HepG2 (cell line): ENCODE measurements at regions of chr7 and their contacts with region 1.

Region 1: GRCh38 chr7:151759591-151760042 is 117.3 kb downstream of the PRKAG2 start:
- DNase-seq: peak; percentile 56
- ATAC-seq: peak; percentile 89
- H3K4me3 ChIP-seq: no peak overlapping the region
- H3K27ac ChIP-seq: no peak overlapping the region
- H3K4me1 ChIP-seq: no peaks in the 10 kb centered on the region
- H3K27me3 ChIP-seq: peaks cover 3 to 33% of the 10 kb centered on the region in 2 experiments; a peak in 4 of 5 replicates
- CTCF ChIP-seq: peak; percentile 93
- EP300 ChIP-seq: no peak
- POLR2A ChIP-seq: no peak
- RAD21 ChIP-seq: peak; percentile 85

Region 2: GRCh38 chr7:151368136-151368571 is 391.5 kb before region 1 on chr7:
- CTCF ChIA-PET with region 1: interaction called, 10 read pairs
- POLR2A ChIA-PET with region 1: no interaction called
- in situ Hi-C with region 1: no loop called
- intact Hi-C with region 1: no loop called
- DNase-seq: peak; percentile 68
- ATAC-seq: peak; percentile 100
- H3K4me3 ChIP-seq: no peak overlapping the region
- H3K27ac ChIP-seq: no peak overlapping the region
- H3K4me1 ChIP-seq: no peaks in the 10 kb centered on the region
- H3K27me3 ChIP-seq: no peaks in the 10 kb centered on the region
- CTCF ChIP-seq: peak; percentile 95
- EP300 ChIP-seq: no peak
- POLR2A ChIP-seq: no peak
- RAD21 ChIP-seq: peak; percentile 89

Region 3: GRCh38 chr7:151570366-151570915 is 189.2 kb before region 1 on chr7:
- CTCF ChIA-PET with region 1: interaction called, 14 read pairs
- POLR2A ChIA-PET with region 1: no interaction called
- in situ Hi-C with region 1: loop called (anchors 10 kb)
- intact Hi-C with region 1: loop called (anchors 2 kb)
- DNase-seq: no peak
- ATAC-seq: no peak
- H3K4me3 ChIP-seq: no peak overlapping the region
- H3K27ac ChIP-seq: no peak overlapping the region
- H3K4me1 ChIP-seq: no peaks in the 10 kb centered on the region
- H3K27me3 ChIP-seq: no peaks in the 10 kb centered on the region
- CTCF ChIP-seq: 0 out of 2 replicates have a peak, but pooled peaks have one; percentile 26
- EP300 ChIP-seq: no peak
- POLR2A ChIP-seq: no peak
- RAD21 ChIP-seq: no peak

Region 4: DNA sequence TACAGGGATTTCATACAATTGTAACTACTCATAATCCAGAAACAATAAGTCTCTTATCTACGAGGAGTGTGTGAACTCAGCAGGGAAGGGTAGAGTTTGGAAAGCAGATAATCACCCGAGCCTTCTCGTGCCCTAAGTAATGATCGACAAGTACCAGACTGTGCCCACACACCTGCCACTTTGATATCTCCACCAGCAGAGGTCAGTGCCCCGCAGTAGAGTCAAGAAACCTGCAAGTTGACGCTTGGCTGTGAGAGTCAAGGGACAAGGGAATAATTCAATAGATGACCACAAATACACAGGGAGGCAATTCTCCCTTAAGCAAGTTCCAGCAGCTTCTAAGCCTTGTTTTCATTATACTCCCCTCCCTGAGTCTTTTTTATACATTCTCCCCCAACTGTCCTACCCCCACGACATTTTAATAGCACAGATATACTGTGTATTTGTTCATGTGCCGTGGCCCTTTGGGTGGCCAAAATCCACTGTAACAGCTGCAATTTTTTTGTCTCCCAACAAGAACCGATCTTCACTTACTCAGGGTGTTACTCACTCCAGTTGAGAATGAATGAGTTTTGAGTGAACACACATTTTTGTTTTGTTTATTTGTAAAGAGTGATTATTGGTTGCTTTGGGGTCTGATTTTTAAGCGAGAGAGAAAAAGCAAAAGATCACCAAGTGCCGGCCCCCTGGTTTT is 133.0 kb before region 1 on chr7:
- CTCF ChIA-PET with region 1: interaction called, 9 read pairs
- POLR2A ChIA-PET with region 1: no interaction called
- in situ Hi-C with region 1: loop called (anchors 5 kb)
- intact Hi-C with region 1: loop called (anchors 2 kb)
- DNase-seq: peak; percentile 45
- ATAC-seq: peak; percentile 75
- H3K4me3 ChIP-seq: no peak overlapping the region
- H3K27ac ChIP-seq: no peak overlapping the region
- H3K4me1 ChIP-seq: peaks cover 10% of the 10 kb centered on the region
- H3K27me3 ChIP-seq: peaks cover 0 to 21% of the 10 kb centered on the region in 2 experiments; a peak in 2 of 5 replicates
- CTCF ChIP-seq: peak; percentile 58
- EP300 ChIP-seq: no peak
- POLR2A ChIP-seq: no peak
- RAD21 ChIP-seq: no peak

Region 5: GRCh38 chr7:151705636-151706276 is 53.9 kb before region 1 on chr7:
- CTCF ChIA-PET with region 1: no interaction called
- POLR2A ChIA-PET with region 1: no interaction called
- in situ Hi-C with region 1: no loop called
- intact Hi-C with region 1: no loop called
- DNase-seq: peak; percentile 30
- ATAC-seq: peak; percentile 78
- H3K4me3 ChIP-seq: no peak overlapping the region; a peak in 1 of 6 replicates
- H3K27ac ChIP-seq: no peak overlapping the region
- H3K4me1 ChIP-seq: peaks cover 7% of the 10 kb centered on the region; the same call in 1 of the 2 replicates
- H3K27me3 ChIP-seq: peaks cover 4 to 18% of the 10 kb centered on the region in 2 experiments; a peak in 3 of 5 replicates
- CTCF ChIP-seq: peak; percentile 54
- EP300 ChIP-seq: no peak
- POLR2A ChIP-seq: no peak
- RAD21 ChIP-seq: no peak

Region 6: DNA sequence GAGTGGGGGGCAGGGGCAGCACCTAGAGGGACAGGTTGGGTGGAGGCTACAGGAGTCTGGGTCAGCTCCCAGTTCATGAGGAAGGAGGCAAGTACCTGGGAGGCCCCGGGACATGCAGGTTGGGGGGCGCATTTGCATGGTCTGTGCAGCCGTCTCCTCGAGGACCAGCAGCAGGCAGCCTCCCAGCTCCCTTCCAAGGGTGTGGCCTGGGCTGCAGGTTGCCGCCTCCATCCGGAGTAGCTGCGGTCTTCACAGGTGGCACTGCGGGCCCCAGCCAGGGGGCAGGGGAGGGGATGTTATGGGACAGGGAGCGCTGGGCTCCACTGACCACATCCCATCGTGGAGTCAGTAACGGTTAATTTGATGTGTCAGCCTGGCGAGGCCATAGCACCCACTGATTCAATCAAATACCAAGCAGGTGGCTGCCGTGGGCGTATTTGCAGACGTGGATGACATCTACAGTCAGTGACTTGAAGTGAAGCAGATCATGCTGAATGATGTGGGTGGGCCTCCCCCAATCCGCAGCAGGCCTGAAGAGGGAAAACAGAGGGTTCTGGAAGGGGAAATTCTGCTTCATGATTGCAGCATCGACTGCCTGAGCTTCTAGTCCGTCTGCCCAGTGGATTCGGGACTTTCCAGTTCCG is 35.7 kb after region 1 on chr7:
- CTCF ChIA-PET with region 1: no interaction called
- POLR2A ChIA-PET with region 1: no interaction called
- in situ Hi-C with region 1: no loop called
- intact Hi-C with region 1: no loop called
- DNase-seq: no peak
- ATAC-seq: no peak
- H3K4me3 ChIP-seq: no peak overlapping the region
- H3K27ac ChIP-seq: no peak overlapping the region
- H3K4me1 ChIP-seq: no peaks in the 10 kb centered on the region
- H3K27me3 ChIP-seq: peaks cover 4 to 18% of the 10 kb centered on the region in 2 experiments; a peak in 3 of 5 replicates
- CTCF ChIP-seq: no peak
- EP300 ChIP-seq: no peak
- POLR2A ChIP-seq: no peak
- RAD21 ChIP-seq: no peak